ENCODE measurements at regions of chr15 and their contacts with region 1.

Region 1: DNA sequence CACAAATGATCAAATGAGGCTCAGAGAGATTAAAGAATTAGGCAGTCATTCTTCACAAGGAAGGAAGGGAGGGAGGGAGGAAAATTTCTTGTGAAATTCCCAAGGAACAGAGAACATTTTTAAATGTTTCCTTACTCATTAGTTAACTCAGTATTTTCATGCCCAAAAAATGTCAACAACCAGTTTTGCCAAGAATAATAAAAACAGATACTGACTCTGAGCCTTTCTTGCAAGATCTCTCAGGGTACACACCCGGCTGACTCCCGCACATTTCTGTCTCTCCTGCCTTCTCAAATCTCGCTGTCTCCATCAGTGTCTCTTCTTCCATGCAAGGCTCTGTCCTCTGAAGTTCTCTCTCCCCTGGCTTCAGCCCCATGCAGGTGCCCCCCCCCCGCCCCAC is 265.9 kb downstream of the TJP1 start:
- DNase-seq: no peak
- ATAC-seq: no peak
- H3K4me3 ChIP-seq: no peak overlapping the region
- H3K27ac ChIP-seq: no peak overlapping the region
- H3K4me1 ChIP-seq: no peaks in the 10 kb centered on the region
- H3K27me3 ChIP-seq: no peaks in the 10 kb centered on the region
- CTCF ChIP-seq: no peak

Region 2: GRCh38 chr15:29242456-29243242 is 313.7 kb before region 1 on chr15:
- intact Hi-C with region 1: loop called in 1 of 3 experiments (anchors 5 kb)
- DNase-seq: no peak
- ATAC-seq: no peak
- H3K4me3 ChIP-seq: no peak overlapping the region
- H3K27ac ChIP-seq: no peak overlapping the region
- H3K4me1 ChIP-seq: no peaks in the 10 kb centered on the region
- H3K27me3 ChIP-seq: no peaks in the 10 kb centered on the region
- CTCF ChIP-seq: no peak

Region 3: DNA sequence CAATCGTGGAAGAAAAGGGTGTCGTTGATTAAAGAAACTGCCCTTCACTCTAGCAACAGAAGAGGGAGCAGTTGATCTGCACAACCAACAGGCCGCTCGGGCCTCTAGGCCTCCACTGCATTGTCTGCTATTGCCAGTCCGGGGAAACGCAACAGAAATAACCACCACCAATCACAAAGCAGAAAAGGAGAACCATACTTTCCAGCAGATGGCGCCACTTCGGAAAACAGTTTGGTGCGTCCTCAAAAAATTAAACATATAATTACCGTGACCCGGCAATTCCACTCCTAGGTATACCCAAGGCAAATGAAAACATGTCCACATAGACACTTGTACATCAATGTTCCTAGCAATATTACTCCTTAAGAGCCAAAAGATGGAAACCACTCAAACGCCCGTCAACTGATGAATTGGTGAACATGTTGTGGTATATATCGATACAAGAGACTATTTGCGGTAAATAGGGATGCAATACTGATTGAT is 111.8 kb after region 1 on chr15:
- intact Hi-C with region 1: no loop called
- DNase-seq: peak; percentile 79 to 92 (median 85)
- ATAC-seq: peak; percentile 79 to 91 (median 87)
- H3K4me3 ChIP-seq: no peak overlapping the region
- H3K27ac ChIP-seq: no peak overlapping the region
- H3K4me1 ChIP-seq: peaks cover 20 to 21% (median 20%) of the 10 kb centered on the region in 3 donors
- H3K27me3 ChIP-seq: no peaks in the 10 kb centered on the region
- CTCF ChIP-seq: peak; percentile 76 to 87 (median 84)